WTC11 (cell line): ENCODE measurements at regions of chr3 and their contacts with region 1.

Region 1: DNA sequence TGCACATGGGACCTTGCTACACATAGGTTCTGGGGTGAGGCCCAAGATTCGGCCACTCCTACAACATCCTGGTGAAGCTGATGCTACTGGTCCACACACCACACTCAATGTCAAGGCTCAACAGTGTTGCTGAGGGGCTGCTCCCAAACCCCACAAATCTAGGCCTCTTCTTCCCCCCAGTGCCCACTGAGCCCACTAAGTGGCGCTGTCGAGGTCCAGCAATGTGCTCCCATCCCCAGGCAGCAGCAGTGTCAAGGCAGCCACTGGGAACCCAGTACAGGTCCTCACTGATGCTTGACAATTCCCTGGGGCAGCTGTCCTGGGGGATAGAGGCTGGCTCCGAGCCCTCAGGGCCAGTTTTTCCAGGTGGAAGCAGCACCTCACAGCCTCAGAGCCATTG is 21.5 kb downstream of the SCN5A start:
- DNase-seq: peak; percentile 87
- ATAC-seq: peak; percentile 86
- H3K4me3 Mint-ChIP-seq: no peak overlapping the region
- H3K27ac Mint-ChIP-seq: no peak overlapping the region
- H3K4me1 Mint-ChIP-seq: peaks cover 14% of the 10 kb centered on the region
- H3K27me3 Mint-ChIP-seq: no peaks in the 10 kb centered on the region; the same call in 1 of the 2 replicates
- CTCF ChIP-seq: peak; percentile 51

Region 2: GRCh38 chr3:38496131-38496910 is 131.6 kb before region 1 on chr3 and contains the start of gene EXOG:
- CTCF ChIA-PET with region 1: interaction called, 16 read pairs
- POLR2A ChIA-PET with region 1: no interaction called
- DNase-seq: peak; percentile 96
- ATAC-seq: peak; percentile 93
- H3K4me3 Mint-ChIP-seq: peak within 1 kb of the TSS; percentile 93
- H3K27ac Mint-ChIP-seq: peak within 1 kb of the TSS; percentile 68
- H3K4me1 Mint-ChIP-seq: peaks cover 5% of the 10 kb centered on the region
- H3K27me3 Mint-ChIP-seq: no peaks in the 10 kb centered on the region
- CTCF ChIP-seq: peak; percentile 71
- total RNA-seq, gene EXOG: 12.2 to 13.7 TPM (median 12.9 TPM) in 3 replicates

Region 3: DNA sequence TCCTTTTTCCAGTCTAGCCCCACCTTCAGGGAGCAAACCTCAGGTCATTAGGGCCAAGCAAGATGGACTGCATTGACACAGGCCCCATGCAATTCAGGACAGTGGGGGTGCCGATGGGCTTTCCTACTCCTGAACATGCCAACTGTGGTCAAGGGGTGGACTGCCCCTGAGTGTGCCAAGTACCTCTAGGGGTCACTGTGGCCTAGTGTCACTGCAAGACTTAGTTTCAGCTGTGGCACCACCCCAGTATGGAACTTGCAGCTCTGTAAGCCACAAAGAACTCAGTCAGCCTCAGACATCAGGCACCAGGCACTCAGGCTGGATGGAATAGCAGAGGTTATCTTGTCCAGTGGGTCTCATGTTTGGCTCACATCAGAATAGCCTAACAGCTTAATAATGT is 99.5 kb before region 1 on chr3:
- CTCF ChIA-PET with region 1: interaction called, 11 read pairs
- POLR2A ChIA-PET with region 1: no interaction called
- DNase-seq: peak; percentile 53
- ATAC-seq: peak; percentile 88
- H3K4me3 Mint-ChIP-seq: no peak overlapping the region
- H3K27ac Mint-ChIP-seq: peak overlapping the region; percentile 29; the same call in 1 of the 2 replicates
- H3K4me1 Mint-ChIP-seq: peaks cover 21% of the 10 kb centered on the region
- H3K27me3 Mint-ChIP-seq: no peaks in the 10 kb centered on the region
- CTCF ChIP-seq: no peak

Region 4: DNA sequence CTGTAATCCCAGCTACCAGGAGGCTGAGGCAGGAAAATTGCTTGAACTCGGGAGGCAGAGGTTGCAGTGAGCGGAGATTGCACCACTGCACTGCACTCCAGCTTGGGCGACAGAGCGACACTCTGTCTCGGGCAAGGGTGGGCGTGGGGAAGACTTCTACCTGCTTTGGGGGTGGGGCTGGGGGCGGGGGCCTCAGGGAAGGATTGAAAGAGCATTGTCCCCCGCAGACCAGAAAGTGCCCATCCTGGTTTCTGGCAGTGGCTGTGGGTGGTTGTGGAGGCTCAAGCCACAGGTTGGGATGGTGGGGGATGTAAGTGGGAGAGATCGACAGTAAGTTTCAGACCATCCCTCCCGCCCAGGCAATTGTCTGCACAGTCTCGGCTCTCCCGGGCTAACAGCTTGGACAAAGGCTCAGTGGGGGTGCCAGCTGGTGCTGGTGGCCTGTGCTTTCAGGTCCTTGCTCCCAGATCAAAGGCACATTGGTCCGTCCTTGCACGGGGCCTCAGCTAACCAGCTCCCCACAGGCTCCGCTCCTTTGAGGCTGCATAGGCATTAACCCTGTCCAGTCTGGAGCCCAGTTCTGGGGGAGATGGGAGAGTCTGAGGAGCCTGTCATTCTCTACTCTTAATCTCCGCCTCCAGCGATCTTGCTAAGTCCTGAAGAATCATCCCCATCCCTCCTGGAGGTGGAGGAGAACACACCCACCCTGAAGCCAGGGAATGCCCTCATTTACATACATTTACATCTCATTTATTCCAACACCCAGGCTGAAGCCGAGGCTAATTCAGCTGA is 12.9 kb after region 1 on chr3:
- CTCF ChIA-PET with region 1: interaction called, 38 read pairs
- POLR2A ChIA-PET with region 1: interaction called, 5 read pairs
- DNase-seq: peak; percentile 83
- ATAC-seq: peak; percentile 79
- H3K4me3 Mint-ChIP-seq: peak overlapping the region; percentile 55
- H3K27ac Mint-ChIP-seq: no peak overlapping the region
- H3K4me1 Mint-ChIP-seq: peaks cover 51% of the 10 kb centered on the region
- H3K27me3 Mint-ChIP-seq: no peaks in the 10 kb centered on the region
- CTCF ChIP-seq: no peak

Region 5: GRCh38 chr3:38662544-38662943 is 34.6 kb after region 1 on chr3:
- CTCF ChIA-PET with region 1: interaction called, 15 read pairs
- POLR2A ChIA-PET with region 1: no interaction called
- DNase-seq: peak; percentile 42
- ATAC-seq: peak; percentile 96
- H3K4me3 Mint-ChIP-seq: no peak overlapping the region
- H3K27ac Mint-ChIP-seq: no peak overlapping the region
- H3K4me1 Mint-ChIP-seq: peaks cover 8% of the 10 kb centered on the region
- H3K27me3 Mint-ChIP-seq: peaks cover 7% of the 10 kb centered on the region
- CTCF ChIP-seq: peak; percentile 61